ENCODE measurements at regions of chr1 and their contacts with region 1.

Region 1: DNA sequence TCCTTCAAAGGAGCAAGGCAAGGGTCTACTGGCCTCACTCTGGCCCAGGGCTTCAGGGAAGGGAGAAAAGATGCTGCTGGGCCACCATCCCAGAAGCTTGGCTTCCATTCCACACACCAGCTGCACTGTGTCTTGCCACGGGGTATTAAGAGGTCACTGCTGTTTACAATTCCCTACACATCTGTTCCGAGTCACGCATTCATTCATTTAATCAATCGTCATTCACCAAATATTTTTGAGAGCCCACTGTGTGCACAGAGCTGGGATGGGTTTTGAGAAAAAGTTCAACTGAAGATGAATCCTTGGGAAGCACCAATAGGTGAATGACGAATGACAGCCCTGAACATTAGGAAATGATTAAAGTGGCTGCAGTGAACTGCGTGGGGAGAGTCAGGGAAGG is 101.7 kb downstream of the NAV1 start:
- DNase-seq: peak; percentile 23
- H3K4me3 ChIP-seq: no peak overlapping the region
- H3K27ac ChIP-seq: peak overlapping the region; percentile 34 to 56 (median 54)
- H3K4me1 ChIP-seq: peaks cover 0 to 10% (median 0%) of the 10 kb centered on the region in 4 donors
- H3K27me3 ChIP-seq: no peaks in the 10 kb centered on the region
- CTCF ChIP-seq: no peak
- EP300 ChIP-seq: no peak
- POLR2A ChIP-seq: no peak

Region 2: DNA sequence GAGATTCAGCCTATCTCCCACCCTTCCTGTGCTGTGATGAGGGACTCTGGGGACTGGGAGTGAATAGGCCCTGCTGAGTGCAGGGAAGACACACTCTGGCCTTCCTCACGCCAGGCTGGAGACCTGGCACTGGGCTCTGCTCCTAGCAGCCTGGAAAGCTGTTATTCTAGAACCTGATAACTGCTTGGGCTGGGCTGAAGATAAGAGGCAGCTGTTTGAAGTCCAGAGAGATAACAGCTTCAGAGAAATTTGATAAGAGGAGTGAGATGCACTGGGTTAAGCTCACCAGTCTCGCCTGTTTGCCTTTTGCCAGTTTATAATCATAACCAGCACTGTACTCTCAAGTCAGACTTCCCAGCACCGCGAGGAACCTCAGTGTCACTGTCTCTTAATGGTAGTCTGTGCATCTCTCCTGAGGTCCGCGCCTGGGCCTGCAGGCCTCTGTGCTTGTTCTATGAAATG is 435.5 kb after region 1 on chr1:
- in situ Hi-C with region 1: no loop called
- intact Hi-C with region 1: loop called (anchors 5 kb)
- DNase-seq: peak; percentile 68
- H3K4me3 ChIP-seq: no peak overlapping the region
- H3K27ac ChIP-seq: peak overlapping the region; percentile 84 to 91 (median 86)
- H3K4me1 ChIP-seq: peaks cover 14 to 76% (median 44%) of the 10 kb centered on the region in 4 donors
- H3K27me3 ChIP-seq: no peaks in the 10 kb centered on the region
- CTCF ChIP-seq: no peak
- EP300 ChIP-seq: peak; percentile 43
- POLR2A ChIP-seq: peak; percentile 85